Mammary epithelial cell (primary cell): ENCODE measurements at regions of chr7 and their contacts with region 1.

Region 1: GRCh38 chr7:112550468-112551060 is 69.8 kb downstream of the LSMEM1 start:
- DNase-seq: peak; percentile 60
- H3K4me3 ChIP-seq: no peak overlapping the region
- H3K27ac ChIP-seq: no peak overlapping the region
- H3K4me1 ChIP-seq: no peaks in the 10 kb centered on the region
- H3K27me3 ChIP-seq: no peaks in the 10 kb centered on the region
- CTCF ChIP-seq: peak; percentile 98

Region 2: GRCh38 chr7:112715525-112715924 is 165.0 kb after region 1 on chr7:
- CTCF ChIA-PET with region 1: no interaction called
- dilution Hi-C with region 1: no loop called
- in situ Hi-C with region 1: no loop called
- intact Hi-C with region 1: no loop called
- DNase-seq: no peak
- H3K4me3 ChIP-seq: no peak overlapping the region
- H3K27ac ChIP-seq: no peak overlapping the region
- H3K4me1 ChIP-seq: no peaks in the 10 kb centered on the region
- H3K27me3 ChIP-seq: no peaks in the 10 kb centered on the region
- CTCF ChIP-seq: no peak

Region 3: GRCh38 chr7:112869111-112869757 is 318.7 kb after region 1 on chr7:
- CTCF ChIA-PET with region 1: no interaction called
- dilution Hi-C with region 1: no loop called
- in situ Hi-C with region 1: no loop called
- intact Hi-C with region 1: loop called (anchors 1 kb)
- DNase-seq: peak; percentile 25
- H3K4me3 ChIP-seq: no peak overlapping the region
- H3K27ac ChIP-seq: no peak overlapping the region
- H3K4me1 ChIP-seq: no peaks in the 10 kb centered on the region
- H3K27me3 ChIP-seq: no peaks in the 10 kb centered on the region
- CTCF ChIP-seq: peak; percentile 89 to 91

Region 4: DNA sequence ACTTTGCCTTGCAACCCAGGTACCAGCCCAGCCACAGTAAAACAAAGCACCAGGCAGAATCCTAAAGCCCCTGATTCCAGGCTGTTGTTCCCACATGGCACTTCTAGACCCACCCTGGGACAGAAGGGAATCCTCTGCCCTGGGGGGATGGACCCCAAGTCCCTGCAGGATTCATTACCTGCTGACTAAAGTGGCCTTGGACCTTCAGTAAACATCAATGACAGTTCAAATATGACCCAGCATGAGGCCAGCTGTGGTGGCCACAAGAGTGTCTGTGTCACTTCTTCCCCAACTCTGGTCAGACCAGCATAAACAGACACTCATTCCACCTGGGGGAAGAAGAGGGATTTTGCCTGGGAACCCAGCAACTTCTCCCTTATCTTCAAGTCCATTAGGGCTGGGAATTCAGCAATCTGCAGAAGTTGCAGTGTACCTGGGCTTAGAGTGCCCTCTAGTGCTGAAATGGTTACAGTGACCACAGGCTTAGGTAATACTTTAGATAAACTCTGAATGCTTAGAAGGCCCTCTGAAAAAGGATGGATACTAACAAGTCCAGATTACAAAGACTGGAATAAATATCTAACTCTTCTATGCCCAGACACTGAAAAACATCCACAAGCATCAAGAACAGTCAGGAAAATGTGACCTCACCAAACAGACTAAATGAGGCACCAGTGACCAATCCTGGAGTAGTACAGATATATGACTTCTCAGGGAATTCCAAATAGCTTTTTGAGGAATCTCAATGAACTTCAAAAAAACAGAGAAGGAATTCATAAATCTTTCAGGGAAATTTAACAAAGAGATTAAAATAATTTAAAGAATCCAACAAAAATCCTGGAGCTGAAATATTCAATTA is 348.1 kb after region 1 on chr7:
- CTCF ChIA-PET with region 1: no interaction called
- dilution Hi-C with region 1: no loop called
- in situ Hi-C with region 1: loop called in 1 of 2 experiments (anchors 10 kb)
- intact Hi-C with region 1: loop called (anchors 1 kb)
- DNase-seq: peak; percentile 62
- H3K4me3 ChIP-seq: no peak overlapping the region
- H3K27ac ChIP-seq: no peak overlapping the region
- H3K4me1 ChIP-seq: no peaks in the 10 kb centered on the region
- H3K27me3 ChIP-seq: no peaks in the 10 kb centered on the region
- CTCF ChIP-seq: peak; percentile 81 to 89

Region 5: DNA sequence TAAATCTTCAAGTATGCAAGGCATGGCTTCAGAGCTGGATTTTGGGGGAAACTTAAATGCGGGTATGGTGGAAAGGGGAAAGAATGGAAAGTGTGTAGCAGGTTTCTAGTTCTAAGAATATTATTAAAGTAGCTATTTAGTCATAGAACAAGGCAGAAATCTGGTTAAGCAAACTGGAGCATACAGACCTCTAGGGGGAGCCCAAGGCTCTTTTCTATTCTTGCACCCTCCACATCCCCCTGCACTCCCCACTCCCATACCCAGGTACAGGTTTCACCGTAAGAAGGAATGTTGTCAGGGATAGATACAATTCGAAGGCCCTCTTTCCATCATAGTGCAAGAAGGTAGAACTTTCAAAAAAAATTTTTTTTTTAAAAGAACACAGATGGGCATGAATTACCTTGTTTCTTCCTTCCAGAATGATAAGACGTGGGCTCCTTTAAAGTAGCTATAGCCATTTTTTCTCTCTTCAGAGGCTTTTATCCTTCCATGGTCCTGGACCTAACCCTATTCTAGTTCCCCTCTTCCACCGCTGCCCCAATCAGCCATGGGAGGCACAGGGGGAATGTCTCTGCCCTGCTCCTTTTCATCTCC is 609.3 kb after region 1 on chr7:
- CTCF ChIA-PET with region 1: no interaction called
- dilution Hi-C with region 1: no loop called
- in situ Hi-C with region 1: no loop called
- intact Hi-C with region 1: loop called (anchors 5 kb)
- DNase-seq: peak; percentile 21
- H3K4me3 ChIP-seq: no peak overlapping the region
- H3K27ac ChIP-seq: no peak overlapping the region
- H3K4me1 ChIP-seq: no peaks in the 10 kb centered on the region
- H3K27me3 ChIP-seq: no peaks in the 10 kb centered on the region
- CTCF ChIP-seq: peak; percentile 59 to 82

Region 6: DNA sequence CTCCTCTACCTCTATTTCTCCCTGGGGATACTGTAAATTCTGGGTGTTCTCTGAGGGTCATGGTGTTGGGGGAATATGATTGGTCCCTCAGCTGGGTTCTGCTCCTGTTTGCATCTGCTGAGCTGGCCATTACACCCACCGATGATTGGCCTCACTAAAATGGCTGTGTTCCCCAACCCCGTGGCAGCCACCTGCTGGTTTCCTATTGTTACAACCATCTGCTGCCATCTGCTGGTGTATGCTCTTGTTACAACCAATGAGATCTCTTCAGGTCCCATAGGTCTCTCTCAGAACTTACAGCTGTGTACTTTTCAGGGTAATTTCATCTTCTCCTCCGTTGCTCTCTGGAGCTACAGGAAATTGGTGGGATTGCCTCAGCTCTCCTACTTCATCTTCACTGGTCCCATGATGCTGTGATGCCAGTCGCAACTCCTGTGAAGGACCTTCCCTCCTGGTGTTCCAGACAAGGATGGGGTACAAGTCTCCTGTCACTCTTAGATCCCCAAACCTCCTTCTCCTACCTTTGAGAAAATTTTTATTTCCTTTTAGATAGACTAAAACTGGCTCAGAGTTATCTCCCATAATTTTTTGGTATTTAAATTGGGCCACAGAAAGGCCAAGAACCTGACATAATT is 871.2 kb after region 1 on chr7:
- CTCF ChIA-PET with region 1: no interaction called
- dilution Hi-C with region 1: no loop called
- in situ Hi-C with region 1: loop called in 1 of 2 experiments (anchors 25 kb)
- intact Hi-C with region 1: loop called (anchors 2 kb)
- DNase-seq: peak; percentile 66
- H3K4me3 ChIP-seq: no peak overlapping the region
- H3K27ac ChIP-seq: no peak overlapping the region
- H3K4me1 ChIP-seq: no peaks in the 10 kb centered on the region
- H3K27me3 ChIP-seq: no peaks in the 10 kb centered on the region
- CTCF ChIP-seq: peak; percentile 86 to 92